ENCODE measurements at regions of chr1 and their contacts with region 1.

Region 1: DNA sequence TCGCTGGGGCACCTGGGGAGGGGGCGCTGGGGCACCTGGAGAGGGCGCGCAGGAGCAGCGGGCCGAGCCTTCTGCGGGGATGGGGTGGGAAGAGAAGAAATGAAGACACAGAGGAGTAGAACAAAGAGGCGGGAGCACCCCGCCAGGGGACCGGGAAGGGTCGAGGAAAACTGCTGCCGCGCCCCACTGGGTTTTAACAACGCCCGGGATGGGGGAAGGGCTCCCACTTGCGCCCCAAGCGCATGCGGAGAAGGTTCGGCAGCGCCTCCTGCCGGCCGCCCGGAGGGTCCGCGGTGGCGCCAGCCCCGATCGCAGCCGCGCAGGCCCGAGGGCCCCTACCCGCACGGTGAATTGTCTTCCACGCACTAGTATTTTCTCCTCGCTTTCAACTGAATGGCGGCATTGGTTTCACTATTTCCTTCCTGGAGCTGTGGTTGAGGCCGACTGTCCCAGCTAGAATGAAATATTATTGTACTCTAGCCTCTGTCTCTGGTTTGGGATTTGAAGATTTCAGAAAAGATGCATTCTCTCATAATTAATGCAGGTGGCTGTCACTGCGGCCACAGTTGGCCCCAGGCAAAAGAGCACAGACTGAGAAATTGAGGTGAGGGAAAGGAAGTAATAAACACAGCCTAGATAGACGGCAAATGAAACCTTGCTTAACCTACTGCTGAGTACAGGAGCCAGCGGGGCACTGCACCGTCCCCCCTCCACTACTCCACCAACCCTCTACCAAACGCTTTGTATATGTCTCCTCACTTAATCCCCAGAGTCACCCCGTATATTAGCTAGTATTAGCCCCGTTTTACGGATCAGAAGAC is 57.3 kb downstream of the MAB21L3 start:
- DNase-seq: peak; percentile 84 to 87 (median 86)
- ATAC-seq: peak; percentile 35 to 93 (median 83)
- H3K4me3 ChIP-seq: peak overlapping the region; percentile 12 to 77 (median 60)
- H3K27ac ChIP-seq: peak overlapping the region; percentile 51 to 85 (median 64)
- H3K4me1 ChIP-seq: peaks cover 0 to 53% (median 28%) of the 10 kb centered on the region in 12 donors
- H3K27me3 ChIP-seq: no peaks in the 10 kb centered on the region
- CTCF ChIP-seq: peak; percentile 85 to 98 (median 94)
- POLR2A ChIP-seq: no peak

Region 2: GRCh38 chr1:116139592-116140134 is 28.8 kb before region 1 on chr1:
- intact Hi-C with region 1: loop called in 2 of 10 experiments (anchors 1 to 2 kb)
- DNase-seq: no peak
- ATAC-seq: no peak
- H3K4me3 ChIP-seq: no peak overlapping the region
- H3K27ac ChIP-seq: no peak overlapping the region
- H3K4me1 ChIP-seq: peaks cover 0 to 7% (median 0%) of the 10 kb centered on the region in 12 donors
- H3K27me3 ChIP-seq: no peaks in the 10 kb centered on the region
- CTCF ChIP-seq: no peak
- POLR2A ChIP-seq: no peak

Region 3: GRCh38 chr1:116151739-116152576 is 16.5 kb before region 1 on chr1:
- intact Hi-C with region 1: loop called in 1 of 10 experiments (anchors 2 kb)
- DNase-seq: peak; percentile 77 to 86 (median 79)
- ATAC-seq: peak; percentile 60 to 98 (median 94)
- H3K4me3 ChIP-seq: peak overlapping the region in 10 of 12 donors; percentile 38 to 65 (median 54)
- H3K27ac ChIP-seq: peak overlapping the region; percentile 3 to 87 (median 70)
- H3K4me1 ChIP-seq: peaks cover 0 to 27% (median 12%) of the 10 kb centered on the region in 12 donors
- H3K27me3 ChIP-seq: no peaks in the 10 kb centered on the region
- CTCF ChIP-seq: peak; percentile 85 to 98 (median 96)
- POLR2A ChIP-seq: peak in 1 of 2 donors; percentile 24

Measured in heart left ventricle (tissue), 16 donors.